Activated CD4-positive, alpha-beta memory T cell treated with anti-CD3 and anti-CD28 coated beads, Interleukin-2, amount 10 ng/mL, durations not matched to agents 7 days and 5 days (primary cell): ENCODE measurements at regions of chrX and their contacts with region 1.

Region 1: GRCh38 chrX:19334945-19335626 is 8.6 kb upstream of the PDHA1 start:
- DNase-seq: peak; percentile 23
- H3K4me3 Mint-ChIP-seq: no peak overlapping the region
- H3K27ac Mint-ChIP-seq: no peak overlapping the region
- H3K4me1 Mint-ChIP-seq: peaks cover 4% of the 10 kb centered on the region
- H3K27me3 Mint-ChIP-seq: peaks cover 4% of the 10 kb centered on the region

Region 2: GRCh38 chrX:18425199-18426003 is 909.7 kb before region 1 on chrX and contains the start of gene CDKL5:
- CTCF ChIA-PET with region 1: interaction called, 10 read pairs
- POLR2A ChIA-PET with region 1: no interaction called
- DNase-seq: peak; percentile 96
- H3K4me3 Mint-ChIP-seq: peak within 1 kb of the TSS; percentile 78
- H3K27ac Mint-ChIP-seq: peak within 1 kb of the TSS; percentile 40
- H3K4me1 Mint-ChIP-seq: peaks cover 11% of the 10 kb centered on the region
- H3K27me3 Mint-ChIP-seq: peaks cover 11% of the 10 kb centered on the region
- total RNA-seq, gene CDKL5: 1.7 to 2.0 TPM

Region 3: DNA sequence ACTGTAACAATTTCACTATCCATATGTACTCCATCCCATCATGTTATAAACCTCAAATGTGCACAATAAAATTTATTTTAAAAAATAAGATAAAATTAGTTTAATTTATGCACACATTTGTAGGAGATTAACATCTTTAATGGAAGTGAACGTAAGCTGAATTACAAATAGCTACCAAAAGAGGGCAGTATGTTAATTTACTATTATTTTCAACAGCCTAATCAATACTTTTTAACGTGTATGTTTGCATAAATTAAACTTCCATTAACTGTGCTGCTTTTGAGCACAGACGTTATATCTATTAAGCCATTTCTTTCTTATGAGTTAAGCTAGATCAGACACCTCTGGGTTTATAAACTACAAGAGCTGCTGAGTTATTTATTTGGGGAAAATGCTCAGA is 294.7 kb before region 1 on chrX:
- CTCF ChIA-PET with region 1: interaction called, 10 read pairs
- POLR2A ChIA-PET with region 1: no interaction called
- DNase-seq: no peak
- H3K4me3 Mint-ChIP-seq: no peak overlapping the region
- H3K27ac Mint-ChIP-seq: no peak overlapping the region
- H3K4me1 Mint-ChIP-seq: no peaks in the 10 kb centered on the region
- H3K27me3 Mint-ChIP-seq: no peaks in the 10 kb centered on the region

Region 4: GRCh38 chrX:19358526-19358925 is 23.4 kb after region 1 on chrX:
- CTCF ChIA-PET with region 1: no interaction called
- POLR2A ChIA-PET with region 1: no interaction called
- DNase-seq: no peak
- H3K4me3 Mint-ChIP-seq: no peak overlapping the region
- H3K27ac Mint-ChIP-seq: no peak overlapping the region
- H3K4me1 Mint-ChIP-seq: no peaks in the 10 kb centered on the region
- H3K27me3 Mint-ChIP-seq: no peaks in the 10 kb centered on the region

Region 5: GRCh38 chrX:19389227-19389845 is 54.2 kb after region 1 on chrX:
- CTCF ChIA-PET with region 1: no interaction called
- POLR2A ChIA-PET with region 1: no interaction called
- DNase-seq: no peak
- H3K4me3 Mint-ChIP-seq: no peak overlapping the region
- H3K27ac Mint-ChIP-seq: no peak overlapping the region
- H3K4me1 Mint-ChIP-seq: no peaks in the 10 kb centered on the region
- H3K27me3 Mint-ChIP-seq: no peaks in the 10 kb centered on the region

Region 6: DNA sequence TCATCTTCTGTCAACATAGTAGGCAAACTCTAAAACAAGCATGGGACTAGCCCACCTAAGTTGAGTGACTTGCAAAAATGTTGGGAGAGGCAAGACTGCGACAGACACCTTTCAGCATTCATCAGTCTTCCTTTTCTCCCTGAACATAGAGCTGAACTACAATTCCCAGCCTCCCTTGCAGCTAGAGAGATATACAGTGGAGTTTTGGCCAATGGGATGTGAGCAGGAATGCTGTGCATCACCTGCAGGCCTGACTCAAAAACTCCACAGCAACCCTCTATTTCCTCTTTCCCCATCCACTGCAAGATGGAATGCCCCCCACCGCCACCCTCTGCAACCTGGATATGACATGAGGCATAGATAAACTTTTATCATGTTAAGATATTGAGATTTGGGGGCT is 75.2 kb after region 1 on chrX:
- CTCF ChIA-PET with region 1: no interaction called
- POLR2A ChIA-PET with region 1: no interaction called
- DNase-seq: no peak
- H3K4me3 Mint-ChIP-seq: no peak overlapping the region
- H3K27ac Mint-ChIP-seq: no peak overlapping the region
- H3K4me1 Mint-ChIP-seq: no peaks in the 10 kb centered on the region
- H3K27me3 Mint-ChIP-seq: peaks cover 2% of the 10 kb centered on the region